GM10248 (cell line): ENCODE measurements at regions of chr6 and their contacts with region 1.

Region 1: DNA sequence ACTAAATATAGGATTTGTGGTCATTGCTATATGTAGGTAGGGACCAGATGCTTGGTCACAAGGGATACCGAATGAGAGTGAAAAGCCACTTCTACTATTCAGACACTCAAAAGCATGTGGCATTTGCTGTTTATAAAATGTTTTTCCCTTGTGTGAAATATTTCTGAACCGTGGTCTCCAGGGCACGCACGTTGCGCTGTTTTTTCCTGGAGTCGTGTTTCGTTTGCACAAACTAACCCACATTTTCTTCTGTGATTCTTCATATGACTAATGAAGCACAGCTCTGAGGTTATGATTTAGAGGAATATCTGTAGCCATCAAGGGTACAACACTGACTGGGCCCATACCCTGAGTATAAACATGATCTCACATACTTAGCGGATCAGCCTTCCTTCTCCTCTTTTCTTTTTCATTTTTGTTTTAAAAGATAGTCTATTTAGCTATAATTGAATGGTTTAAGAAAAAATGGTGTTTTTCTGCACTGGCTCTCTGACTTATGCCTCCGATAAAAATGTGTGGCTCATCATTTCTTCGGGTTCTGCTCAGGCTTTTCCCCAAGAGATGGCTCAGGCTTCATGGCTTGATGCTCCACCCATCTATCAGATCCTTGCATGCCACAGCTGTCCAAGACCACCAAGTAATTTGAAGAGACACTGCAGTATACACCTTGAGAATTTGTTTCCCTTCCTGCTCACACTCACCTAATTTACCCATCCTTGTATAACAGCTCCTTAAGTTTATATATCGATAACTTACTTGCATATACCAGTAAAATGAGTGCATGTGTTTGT is 59.9 kb upstream of the HBS1L start:
- DNase-seq: peak; percentile 11
- CTCF ChIP-seq: no peak

Region 2: DNA sequence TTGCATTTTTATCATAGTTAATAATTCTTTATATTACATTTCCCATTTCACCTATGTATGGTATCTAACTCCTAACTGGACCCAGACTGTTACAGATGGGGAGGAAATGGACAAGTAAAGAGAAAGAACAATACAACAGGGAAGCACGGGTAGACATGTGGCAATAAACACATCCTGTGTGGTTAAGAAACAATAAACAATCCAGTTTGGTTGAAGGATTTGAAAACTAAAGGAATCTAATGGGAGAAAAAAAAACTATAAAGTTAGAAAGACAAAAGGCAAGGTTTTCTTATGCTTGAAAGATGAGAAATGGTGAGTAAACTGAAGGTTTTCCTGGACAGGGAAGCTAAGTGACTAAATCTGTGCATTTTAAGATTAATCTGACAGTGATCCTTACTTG is 129.7 kb before region 1 on chr6:
- CTCF ChIA-PET with region 1: no interaction called
- POLR2A ChIA-PET with region 1: no interaction called
- DNase-seq: no peak
- CTCF ChIP-seq: no peak

Region 3: GRCh38 chr6:135062735-135063134 is 51.8 kb before region 1 on chr6:
- CTCF ChIA-PET with region 1: no interaction called
- POLR2A ChIA-PET with region 1: no interaction called
- DNase-seq: no peak
- CTCF ChIP-seq: no peak

Region 4: DNA sequence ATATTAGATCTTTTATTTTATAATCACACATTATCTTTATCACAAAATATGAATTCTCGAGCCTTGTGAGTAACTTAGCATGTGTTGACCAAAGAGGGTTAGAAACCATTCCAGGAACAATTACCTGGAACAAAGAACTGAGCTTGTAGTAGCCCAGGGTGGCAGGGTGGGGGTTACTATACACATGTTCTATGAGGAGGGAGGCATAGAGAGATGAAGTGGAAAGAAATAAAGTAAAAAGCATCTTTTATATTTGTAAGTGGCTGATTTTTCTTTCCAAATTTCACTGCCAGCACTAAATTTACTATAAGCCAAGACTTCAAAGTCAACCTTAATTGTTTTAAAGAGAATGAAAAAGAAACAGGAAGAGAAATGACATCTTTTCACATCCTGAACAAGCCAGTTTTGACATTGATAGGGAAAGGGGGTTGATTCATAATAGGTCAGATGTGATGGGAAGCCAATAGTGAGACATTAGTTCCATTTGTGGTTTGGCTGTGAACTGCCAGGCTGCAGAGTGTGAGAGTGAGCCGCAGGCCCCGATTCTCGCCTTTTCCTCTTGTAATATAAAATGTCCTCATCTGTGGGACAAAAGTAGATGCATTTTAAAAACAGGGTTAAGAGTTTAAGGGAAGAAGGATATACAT is 13.8 kb after region 1 on chr6:
- CTCF ChIA-PET with region 1: interaction called, 12 read pairs
- POLR2A ChIA-PET with region 1: interaction called, 3 read pairs
- DNase-seq: peak; percentile 66
- CTCF ChIP-seq: no peak